H1 (cell line): ENCODE measurements at regions of chrX and their contacts with region 1.

Region 1: DNA sequence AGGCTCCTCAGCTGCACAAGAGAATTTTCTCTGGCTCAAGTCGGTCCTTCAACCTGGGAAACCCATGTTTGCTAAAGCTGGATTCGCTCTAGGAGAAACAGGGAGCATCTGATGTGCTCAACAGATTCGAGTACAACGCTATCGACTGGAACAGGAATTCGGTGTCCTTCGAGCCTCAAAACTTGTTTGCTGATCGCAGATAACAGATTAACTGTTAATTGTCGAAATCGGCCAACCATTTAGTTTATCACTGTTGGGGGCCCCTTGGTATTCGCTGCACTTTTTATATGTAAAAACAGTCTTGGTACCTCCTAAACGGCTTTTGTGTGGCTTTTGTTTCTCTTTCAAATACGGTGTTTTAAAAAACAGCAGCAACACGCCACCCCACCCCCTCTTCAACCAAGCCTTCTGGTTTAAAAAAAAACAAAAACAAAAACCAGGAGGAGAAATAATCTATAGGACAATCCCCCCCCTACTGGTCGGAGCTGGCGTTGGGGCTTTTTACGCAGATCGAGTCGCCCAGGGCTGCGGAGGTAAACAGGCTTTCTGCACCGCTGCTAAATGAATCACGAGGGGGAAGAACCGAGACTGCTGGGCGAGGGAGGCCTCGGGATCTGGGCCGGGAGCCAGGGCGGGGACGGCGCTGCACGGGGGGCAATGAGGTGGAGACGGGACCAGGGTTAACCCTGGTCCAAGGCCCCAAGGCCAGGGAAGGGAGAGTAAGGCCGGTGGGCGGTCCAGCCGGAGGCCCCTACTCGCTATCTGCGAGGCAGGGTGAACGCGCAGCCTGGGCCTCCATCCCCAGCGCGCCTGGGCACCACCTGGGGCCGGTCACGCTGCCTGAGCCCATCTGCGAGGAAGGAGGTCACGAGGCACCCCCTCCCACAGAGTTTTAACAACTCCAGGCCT is 71.7 kb upstream of the BCOR start:
- DNase-seq: peak; percentile 73 to 75
- H3K4me3 ChIP-seq: peak overlapping the region; percentile 12 to 50 (median 18); a peak in 6 of 8 replicates
- H3K27ac ChIP-seq: peak overlapping the region; percentile 86; the same call in 1 of the 2 replicates
- H3K4me1 ChIP-seq: peaks cover 3 to 37% (median 28%) of the 10 kb centered on the region in 4 experiments
- H3K27me3 ChIP-seq: peaks cover 0 to 7% (median 0%) of the 10 kb centered on the region in 4 experiments; a peak in 4 of 7 replicates
- CTCF ChIP-seq: peak in 2 of 3 experiments; percentile 35 to 36; a peak in 2 of 4 replicates
- EP300 ChIP-seq: peak in 1 of 2 experiments; percentile 64; a peak in 1 of 3 replicates
- POLR2A ChIP-seq: peak in 1 of 2 experiments; percentile 30; a peak in 1 of 3 replicates
- RAD21 ChIP-seq: peak; percentile 50 to 59

Region 2: GRCh38 chrX:40108959-40109287 is 60.5 kb before region 1 on chrX:
- CTCF ChIA-PET with region 1: interaction called, 3 read pairs
- POLR2A ChIA-PET with region 1: interaction called, 18 read pairs
- DNase-seq: peak in 1 of 2 experiments; percentile 66
- H3K4me3 ChIP-seq: peak overlapping the region; percentile 43 to 66 (median 48)
- H3K27ac ChIP-seq: no peak overlapping the region; the same call in 1 of the 2 replicates
- H3K4me1 ChIP-seq: peaks cover 0 to 5% (median under 1%) of the 10 kb centered on the region in 4 experiments; a peak in 4 of 7 replicates
- H3K27me3 ChIP-seq: peaks cover 2 to 8% (median 6%) of the 10 kb centered on the region in 4 experiments; a peak in 6 of 7 replicates
- CTCF ChIP-seq: no peak
- EP300 ChIP-seq: no peak
- POLR2A ChIP-seq: no peak
- RAD21 ChIP-seq: no peak

Region 3: GRCh38 chrX:40146262-40147125 is 23.0 kb before region 1 on chrX:
- CTCF ChIA-PET with region 1: no interaction called
- POLR2A ChIA-PET with region 1: interaction called, 129 read pairs
- DNase-seq: peak in 1 of 2 experiments; percentile 59
- H3K4me3 ChIP-seq: peak overlapping the region; percentile 49 to 70 (median 53)
- H3K27ac ChIP-seq: no peak overlapping the region
- H3K4me1 ChIP-seq: peaks cover 8 to 42% (median 27%) of the 10 kb centered on the region in 4 experiments
- H3K27me3 ChIP-seq: peaks cover 8 to 48% (median 40%) of the 10 kb centered on the region in 4 experiments
- CTCF ChIP-seq: no peak
- EP300 ChIP-seq: no peak
- POLR2A ChIP-seq: no peak
- RAD21 ChIP-seq: no peak

Region 4: DNA sequence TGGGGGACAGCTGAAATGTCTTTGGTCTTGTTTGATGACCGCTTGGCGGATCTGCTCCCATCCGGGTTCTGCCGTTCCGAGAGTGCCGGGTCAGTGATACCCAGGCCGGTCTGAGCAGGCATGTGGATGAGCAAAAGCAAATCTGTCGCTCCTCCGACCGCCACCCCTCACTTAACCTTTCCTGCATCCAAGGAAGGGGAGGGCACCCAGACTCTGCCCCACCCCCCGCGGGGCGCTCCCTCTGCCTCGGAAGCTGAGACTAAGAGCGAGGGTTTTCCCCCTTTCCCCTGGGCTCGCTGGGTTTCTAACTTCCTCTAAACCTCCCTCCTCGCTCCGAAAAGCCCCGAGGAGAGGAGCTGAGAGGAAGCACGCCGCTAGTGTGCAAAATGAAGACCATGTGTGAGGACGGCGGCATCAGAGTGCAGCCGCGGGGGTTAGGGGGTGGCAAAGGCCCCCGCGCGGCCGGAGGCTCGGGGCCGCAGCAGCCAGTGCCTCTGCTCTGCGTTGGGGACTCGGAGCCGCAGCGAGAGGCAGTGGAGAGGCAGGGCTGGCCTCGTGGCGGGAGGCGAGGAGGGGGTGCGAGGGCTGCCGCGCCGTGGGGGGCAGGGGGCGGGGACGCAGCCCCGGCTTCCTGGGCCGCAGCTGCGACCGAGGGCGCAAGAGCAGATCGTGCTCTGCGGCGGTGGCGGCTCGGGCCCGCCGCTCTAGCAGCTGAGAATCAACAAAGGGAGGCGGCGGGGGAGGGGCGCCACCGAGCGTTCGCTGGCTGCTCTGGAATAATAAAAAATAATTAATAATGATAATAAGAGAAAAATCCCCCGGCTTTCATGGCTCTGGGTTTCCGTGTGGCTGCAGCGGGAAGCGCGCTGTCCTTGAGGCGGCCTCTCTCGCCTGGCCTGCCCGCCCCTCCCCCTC is 15.9 kb before region 1 on chrX:
- CTCF ChIA-PET with region 1: interaction called, 5 read pairs
- POLR2A ChIA-PET with region 1: interaction called, 129 read pairs
- DNase-seq: peak in 1 of 2 experiments; percentile 51
- H3K4me3 ChIP-seq: peak overlapping the region; percentile 36 to 86 (median 54)
- H3K27ac ChIP-seq: no peak overlapping the region
- H3K4me1 ChIP-seq: peaks cover 6 to 22% (median 15%) of the 10 kb centered on the region in 4 experiments
- H3K27me3 ChIP-seq: peaks cover 8 to 36% (median 28%) of the 10 kb centered on the region in 4 experiments
- CTCF ChIP-seq: no peak
- EP300 ChIP-seq: no peak
- POLR2A ChIP-seq: no peak; a peak in 1 of 3 replicates
- RAD21 ChIP-seq: no peak

Region 5: DNA sequence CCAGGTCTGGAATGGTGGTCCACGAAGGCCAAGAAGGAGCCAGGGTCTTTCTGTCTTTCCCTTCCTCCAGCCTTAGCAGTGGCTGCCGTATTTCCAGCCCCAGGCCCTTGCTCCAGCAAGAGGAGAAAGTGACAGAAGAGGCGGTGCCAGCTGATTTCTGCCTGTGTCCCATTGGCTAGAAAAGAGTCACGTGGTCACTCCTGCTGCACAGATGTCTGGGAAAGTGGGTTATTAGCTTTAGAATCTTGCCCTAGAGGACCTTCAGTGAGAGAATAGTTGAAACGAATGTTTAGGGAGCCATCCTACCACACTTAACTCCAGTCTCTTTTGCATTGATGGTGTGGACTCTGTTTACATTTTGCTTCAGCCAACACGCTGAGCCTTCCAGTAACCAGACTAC is 27.6 kb after region 1 on chrX:
- CTCF ChIA-PET with region 1: no interaction called
- POLR2A ChIA-PET with region 1: no interaction called
- DNase-seq: no peak
- H3K4me3 ChIP-seq: no peak overlapping the region
- H3K27ac ChIP-seq: no peak overlapping the region
- H3K4me1 ChIP-seq: no peaks in the 10 kb centered on the region
- H3K27me3 ChIP-seq: no peaks in the 10 kb centered on the region
- CTCF ChIP-seq: no peak
- EP300 ChIP-seq: no peak
- POLR2A ChIP-seq: no peak
- RAD21 ChIP-seq: no peak

Region 6: GRCh38 chrX:40318801-40319200 is 149.4 kb after region 1 on chrX:
- CTCF ChIA-PET with region 1: no interaction called
- POLR2A ChIA-PET with region 1: no interaction called
- DNase-seq: no peak
- H3K4me3 ChIP-seq: no peak overlapping the region
- H3K27ac ChIP-seq: no peak overlapping the region
- H3K4me1 ChIP-seq: no peaks in the 10 kb centered on the region
- H3K27me3 ChIP-seq: no peaks in the 10 kb centered on the region
- CTCF ChIP-seq: no peak
- EP300 ChIP-seq: no peak
- POLR2A ChIP-seq: no peak
- RAD21 ChIP-seq: no peak